WTC11 (cell line): ENCODE measurements at regions of chr9 and their contacts with region 1.

Region 1: GRCh38 chr9:130732131-130732530 is 38.6 kb downstream of the EXOSC2 start:
- DNase-seq: no peak
- ATAC-seq: peak; percentile 56
- H3K4me3 Mint-ChIP-seq: no peak overlapping the region
- H3K27ac Mint-ChIP-seq: no peak overlapping the region
- H3K4me1 Mint-ChIP-seq: peaks cover 23% of the 10 kb centered on the region
- H3K27me3 Mint-ChIP-seq: no peaks in the 10 kb centered on the region
- CTCF ChIP-seq: no peak

Region 2: DNA sequence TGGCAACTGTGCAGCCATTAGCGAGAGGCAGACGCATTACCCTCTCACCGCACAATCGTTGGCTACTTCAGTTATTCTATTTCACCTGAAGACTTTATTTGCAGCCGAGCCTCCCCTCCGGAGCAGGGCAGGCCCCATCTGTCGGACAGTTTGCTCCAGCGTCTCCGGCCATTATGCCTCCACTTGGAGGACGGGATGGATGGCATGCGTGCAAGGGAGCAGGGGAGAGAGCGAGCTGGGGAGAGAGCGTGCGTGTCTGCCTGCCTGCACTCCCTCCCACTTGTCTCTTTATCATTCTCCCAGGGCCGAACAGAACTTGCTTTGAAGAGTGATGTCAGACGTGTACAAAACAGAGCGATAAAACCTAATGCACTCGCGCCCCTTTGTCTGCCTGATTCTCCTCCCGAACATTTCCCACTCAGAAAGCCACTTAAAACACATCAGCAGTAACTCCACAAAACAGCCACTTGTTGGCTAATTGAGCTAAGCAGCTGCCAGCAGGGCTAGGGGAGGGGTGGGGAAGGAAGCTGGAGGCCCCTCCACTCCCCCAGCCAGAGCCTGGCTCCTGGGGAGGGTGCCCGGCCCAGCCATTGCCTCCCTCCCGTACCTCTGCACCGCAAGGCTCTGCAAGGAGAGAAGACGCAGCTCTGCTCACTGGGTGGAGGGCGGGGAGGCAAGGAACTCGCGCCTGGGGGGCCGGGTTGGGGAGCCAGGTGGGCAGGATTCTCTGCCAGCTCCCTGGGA is 196.1 kb before region 1 on chr9:
- CTCF ChIA-PET with region 1: no interaction called
- POLR2A ChIA-PET with region 1: no interaction called
- DNase-seq: peak; percentile 34
- ATAC-seq: peak; percentile 40
- H3K4me3 Mint-ChIP-seq: peak overlapping the region; percentile 52
- H3K27ac Mint-ChIP-seq: no peak overlapping the region
- H3K4me1 Mint-ChIP-seq: peaks cover 40% of the 10 kb centered on the region
- H3K27me3 Mint-ChIP-seq: peaks cover 27% of the 10 kb centered on the region
- CTCF ChIP-seq: no peak

Region 3: DNA sequence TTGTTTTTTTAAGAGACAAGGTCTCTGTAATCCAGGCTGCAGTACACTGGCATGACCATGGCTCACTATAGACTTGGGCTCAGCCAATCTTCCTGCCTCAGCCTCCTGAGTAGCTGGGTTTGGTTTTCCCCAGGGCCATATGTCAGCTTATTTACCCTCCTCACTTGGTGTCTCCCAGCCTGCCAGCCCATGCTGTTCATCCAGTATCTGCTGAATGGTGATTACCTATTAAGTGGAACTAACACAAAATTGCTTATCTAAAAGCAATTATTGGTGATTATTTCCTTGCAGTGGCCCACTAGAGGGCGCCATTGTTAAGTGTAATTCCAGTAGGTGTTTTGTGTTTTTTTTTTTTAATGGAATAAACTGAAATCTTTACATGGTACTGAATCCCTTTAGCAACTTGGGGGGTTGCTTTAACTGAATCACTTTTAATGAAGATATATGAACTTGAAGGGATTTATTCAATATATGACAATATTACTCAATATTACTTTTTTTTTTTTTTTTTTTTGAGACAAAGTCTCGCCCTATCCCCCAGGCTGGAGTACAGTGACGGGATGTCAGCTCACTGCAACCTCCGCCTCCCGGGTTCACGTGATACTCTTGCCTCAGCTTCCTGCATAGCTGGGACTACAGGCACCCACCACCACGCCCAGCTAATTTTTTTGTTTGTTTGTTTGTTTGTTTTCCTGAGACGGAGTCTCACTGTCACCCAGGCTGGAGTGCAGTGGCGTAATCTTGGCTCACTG is 24.7 kb before region 1 on chr9:
- CTCF ChIA-PET with region 1: interaction called, 14 read pairs
- POLR2A ChIA-PET with region 1: no interaction called
- DNase-seq: peak; percentile 70
- ATAC-seq: peak; percentile 50
- H3K4me3 Mint-ChIP-seq: no peak overlapping the region
- H3K27ac Mint-ChIP-seq: peak overlapping the region; percentile 91
- H3K4me1 Mint-ChIP-seq: peaks cover 3% of the 10 kb centered on the region; the same call in 1 of the 2 replicates
- H3K27me3 Mint-ChIP-seq: no peaks in the 10 kb centered on the region
- CTCF ChIP-seq: peak; percentile 80

Region 4: GRCh38 chr9:130789747-130790672 is 57.9 kb after region 1 on chr9:
- CTCF ChIA-PET with region 1: no interaction called
- POLR2A ChIA-PET with region 1: no interaction called
- DNase-seq: no peak
- ATAC-seq: no peak
- H3K4me3 Mint-ChIP-seq: no peak overlapping the region
- H3K27ac Mint-ChIP-seq: no peak overlapping the region
- H3K4me1 Mint-ChIP-seq: peaks cover 43% of the 10 kb centered on the region
- H3K27me3 Mint-ChIP-seq: no peaks in the 10 kb centered on the region
- CTCF ChIP-seq: no peak

Region 5: GRCh38 chr9:131289301-131290038 is 557.3 kb after region 1 on chr9 and contains the start of gene PLPP7:
- CTCF ChIA-PET with region 1: no interaction called
- POLR2A ChIA-PET with region 1: no interaction called
- DNase-seq: peak; percentile 75
- ATAC-seq: peak; percentile 97
- H3K4me3 Mint-ChIP-seq: peak within 1 kb of the TSS; percentile 36; the same call in 1 of the 2 replicates
- H3K27ac Mint-ChIP-seq: peak within 1 kb of the TSS; percentile 41; the same call in 1 of the 2 replicates
- H3K4me1 Mint-ChIP-seq: peaks cover 10% of the 10 kb centered on the region
- H3K27me3 Mint-ChIP-seq: peaks cover 3% of the 10 kb centered on the region; the same call in 1 of the 2 replicates
- CTCF ChIP-seq: no peak
- total RNA-seq, gene PLPP7: 4.2 to 4.9 TPM (median 4.7 TPM) in 3 replicates